ENCODE measurements at regions of chrX and their contacts with region 1.

Region 1: GRCh38 chrX:131746474-131746968 is 202.6 kb downstream of the OR13H1 start:
- DNase-seq: peak; percentile 79
- H3K4me3 ChIP-seq: peak overlapping the region; percentile 54 to 66 (median 57)
- H3K27ac ChIP-seq: peak overlapping the region; percentile 57
- H3K4me1 ChIP-seq: no peaks in the 10 kb centered on the region
- H3K27me3 ChIP-seq: no peaks in the 10 kb centered on the region
- CTCF ChIP-seq: peak; percentile 22 to 45

Region 2: GRCh38 chrX:131693359-131693758 is 53.2 kb before region 1 on chrX:
- CTCF ChIA-PET with region 1: no interaction called
- dilution Hi-C with region 1: no loop called
- in situ Hi-C with region 1: no loop called
- intact Hi-C with region 1: no loop called
- DNase-seq: no peak
- H3K4me3 ChIP-seq: no peak overlapping the region
- H3K27ac ChIP-seq: no peak overlapping the region
- H3K4me1 ChIP-seq: no peaks in the 10 kb centered on the region
- H3K27me3 ChIP-seq: no peaks in the 10 kb centered on the region
- CTCF ChIP-seq: no peak

Region 3: GRCh38 chrX:131778269-131779218 is 32.0 kb after region 1 on chrX:
- CTCF ChIA-PET with region 1: no interaction called
- dilution Hi-C with region 1: no loop called
- in situ Hi-C with region 1: no loop called
- intact Hi-C with region 1: loop called (anchors 1 kb)
- DNase-seq: peak; percentile 70
- H3K4me3 ChIP-seq: peak overlapping the region; percentile 36 to 50 (median 49)
- H3K27ac ChIP-seq: peak overlapping the region; percentile 70
- H3K4me1 ChIP-seq: peaks cover 4% of the 10 kb centered on the region
- H3K27me3 ChIP-seq: no peaks in the 10 kb centered on the region
- CTCF ChIP-seq: peak; percentile 21 to 45

Measured in mammary epithelial cell (primary cell).